ENCODE measurements at regions of chr6 and their contacts with region 1.

Region 1: GRCh38 chr6:96381232-96381631 is 140.4 kb upstream of the UFL1 start:
- DNase-seq: no peak
- ATAC-seq: no peak
- H3K4me3 ChIP-seq: no peak overlapping the region
- H3K27ac ChIP-seq: no peak overlapping the region
- H3K4me1 ChIP-seq: no peaks in the 10 kb centered on the region
- H3K27me3 ChIP-seq: no peaks in the 10 kb centered on the region
- CTCF ChIP-seq: no peak

Region 2: GRCh38 chr6:95819939-95820338 is 561.3 kb before region 1 on chr6:
- intact Hi-C with region 1: loop called in 1 of 10 experiments (anchors 10 kb)
- DNase-seq: no peak
- ATAC-seq: no peak
- H3K4me3 ChIP-seq: no peak overlapping the region
- H3K27ac ChIP-seq: no peak overlapping the region
- H3K4me1 ChIP-seq: no peaks in the 10 kb centered on the region
- H3K27me3 ChIP-seq: no peaks in the 10 kb centered on the region
- CTCF ChIP-seq: no peak

Region 3: GRCh38 chr6:96610019-96610418 is 228.8 kb after region 1 on chr6:
- intact Hi-C with region 1: no loop called
- DNase-seq: no peak
- ATAC-seq: no peak
- H3K4me3 ChIP-seq: no peak overlapping the region
- H3K27ac ChIP-seq: no peak overlapping the region
- H3K4me1 ChIP-seq: no peaks in the 10 kb centered on the region
- H3K27me3 ChIP-seq: no peaks in the 10 kb centered on the region
- CTCF ChIP-seq: no peak